Colonic mucosa (tissue), 4 donors: ENCODE measurements at regions of chr3 and their contacts with region 1.

Region 1: GRCh38 chr3:126752303-126752842 is 48.3 kb downstream of the CHCHD6 start:
- DNase-seq: peak; percentile 69
- H3K4me3 ChIP-seq: no peak overlapping the region
- H3K27ac ChIP-seq: no peak overlapping the region
- H3K4me1 ChIP-seq: no peaks in the 10 kb centered on the region
- H3K27me3 ChIP-seq: no peaks in the 10 kb centered on the region
- CTCF ChIP-seq: peak; percentile 86

Region 2: DNA sequence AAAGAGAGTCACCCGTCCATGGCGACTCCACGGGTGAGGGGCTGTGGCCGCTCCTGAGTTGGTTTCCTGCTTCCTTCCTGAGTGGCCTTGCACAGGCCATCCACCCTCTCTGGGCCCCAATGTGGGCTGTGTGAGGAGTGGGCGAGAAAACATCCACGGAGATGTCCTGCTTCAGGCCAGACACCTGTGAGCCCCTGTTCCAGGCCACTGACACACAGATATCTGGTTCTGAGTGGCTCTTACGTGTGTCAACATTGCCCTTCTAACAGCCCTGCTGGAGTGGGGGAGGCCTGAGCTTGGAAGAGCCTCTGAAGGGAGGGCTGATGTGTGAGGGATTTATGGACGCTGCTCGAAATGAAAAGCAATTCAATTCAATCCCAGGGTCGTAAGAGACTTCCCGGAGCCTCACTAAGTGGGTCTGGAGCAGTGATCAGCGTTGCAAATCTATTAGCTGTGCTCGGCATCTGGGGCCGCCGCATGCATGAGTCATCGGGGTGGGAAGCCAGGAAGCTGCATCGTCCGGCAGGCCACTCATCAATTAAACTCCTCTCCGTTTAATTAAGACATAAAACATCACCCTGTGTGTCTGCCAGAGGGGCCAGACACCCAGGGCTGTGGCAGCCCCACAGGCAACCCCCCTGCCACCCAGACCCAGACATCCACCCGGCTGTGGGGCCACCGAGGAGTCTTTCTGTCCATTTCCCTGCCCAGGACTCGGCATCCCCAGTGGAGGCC is 420.6 kb after region 1 on chr3:
- intact Hi-C with region 1: loop called (anchors 10 kb)
- DNase-seq: no peak
- H3K4me3 ChIP-seq: no peak overlapping the region
- H3K27ac ChIP-seq: no peak overlapping the region
- H3K4me1 ChIP-seq: no peaks in the 10 kb centered on the region
- H3K27me3 ChIP-seq: no peaks in the 10 kb centered on the region
- CTCF ChIP-seq: no peak

Region 3: GRCh38 chr3:127455541-127456450 is 703.4 kb after region 1 on chr3:
- intact Hi-C with region 1: loop called (anchors 5 kb)
- DNase-seq: peak; percentile 64
- H3K4me3 ChIP-seq: peak overlapping the region; percentile 18
- H3K27ac ChIP-seq: no peak overlapping the region
- H3K4me1 ChIP-seq: peaks cover 12% of the 10 kb centered on the region
- H3K27me3 ChIP-seq: peaks cover 17% of the 10 kb centered on the region
- CTCF ChIP-seq: peak; percentile 88